Heart right ventricle (tissue), 16 donors: ENCODE measurements at regions of chr1 and their contacts with region 1.

Region 1: DNA sequence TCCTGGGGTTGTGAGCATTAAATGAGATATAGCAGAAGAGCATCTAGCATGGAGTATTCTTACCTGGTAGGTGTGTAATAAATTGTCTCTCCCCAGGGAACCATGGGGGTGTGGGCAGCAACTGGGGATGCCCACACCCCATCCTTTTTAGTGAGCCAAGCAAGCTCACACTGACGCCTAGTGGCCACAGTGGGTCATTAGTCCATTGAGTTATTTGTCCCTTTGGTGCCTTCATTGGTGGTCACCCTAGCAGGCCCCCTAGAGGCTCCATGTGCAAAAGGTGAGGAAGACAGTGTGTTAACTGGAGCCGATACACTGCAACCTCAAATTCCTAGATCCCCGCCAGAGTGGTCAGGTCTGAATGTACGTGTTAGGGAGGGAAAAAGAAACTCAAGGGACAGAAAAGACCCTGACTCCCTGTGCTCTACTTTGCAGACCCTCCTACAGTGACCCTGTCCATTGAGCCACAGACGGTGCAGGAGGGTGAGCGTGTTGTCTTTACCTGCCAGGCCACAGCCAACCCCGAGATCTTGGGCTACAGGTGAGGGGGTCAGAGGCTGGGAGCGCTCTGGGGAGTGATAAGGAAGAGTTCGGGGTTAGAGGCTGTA is 93.3 kb upstream of the CD1D start:
- DNase-seq: peak in 1 of 2 donors; percentile 59
- ATAC-seq: peak in 6 of 8 donors; percentile 50 to 81 (median 73)
- H3K4me3 ChIP-seq: no peak overlapping the region
- H3K27ac ChIP-seq: no peak overlapping the region
- H3K4me1 ChIP-seq: no peaks in the 10 kb centered on the region
- H3K27me3 ChIP-seq: no peaks in the 10 kb centered on the region
- CTCF ChIP-seq: peak; percentile 76 to 89 (median 85)

Region 2: DNA sequence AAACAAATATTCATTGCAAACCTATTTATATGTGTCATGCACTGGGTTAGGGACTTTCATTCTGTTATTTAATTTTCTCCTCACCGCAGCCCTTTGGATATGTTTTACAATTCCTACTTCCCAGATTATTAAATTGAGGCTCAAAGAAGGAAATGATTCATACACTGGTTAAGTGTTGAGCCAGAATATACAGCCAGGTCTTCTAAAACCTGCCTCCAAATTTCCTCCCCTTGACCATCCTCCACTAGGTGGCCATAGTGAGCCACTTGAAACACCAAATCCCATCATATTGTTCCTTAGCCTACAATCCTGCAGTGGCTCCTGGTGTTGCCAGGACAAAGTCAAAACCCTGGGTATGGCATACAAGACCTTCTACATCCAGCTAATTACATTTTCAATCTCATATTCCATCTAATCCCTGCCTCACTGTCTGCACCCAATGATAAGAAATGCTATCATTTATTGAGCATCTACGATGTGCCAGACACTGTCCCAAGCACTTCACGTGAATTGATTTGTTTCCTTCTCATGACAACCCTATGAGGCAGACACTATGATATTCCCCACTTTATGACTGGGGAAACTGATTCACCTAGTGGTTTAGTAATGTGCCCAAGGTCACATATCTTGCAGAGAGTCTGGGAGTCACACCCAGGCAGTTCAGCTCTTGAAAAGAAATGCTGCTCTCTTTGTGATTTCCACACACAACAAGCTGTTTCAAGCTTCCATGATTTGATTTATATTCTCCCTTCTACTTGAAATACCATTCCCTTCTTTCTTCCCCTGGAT is 117.5 kb before region 1 on chr1:
- intact Hi-C with region 1: loop called in 1 of 10 experiments (anchors 5 kb)
- DNase-seq: peak in 1 of 2 donors; percentile 66
- ATAC-seq: peak in 7 of 8 donors; percentile 62 to 78 (median 64)
- H3K4me3 ChIP-seq: no peak overlapping the region
- H3K27ac ChIP-seq: peak overlapping the region in 3 of 10 donors; percentile 2 to 46 (median 33)
- H3K4me1 ChIP-seq: peaks cover 0 to 23% (median 13%) of the 10 kb centered on the region in 9 donors
- H3K27me3 ChIP-seq: no peaks in the 10 kb centered on the region
- CTCF ChIP-seq: peak; percentile 57 to 84 (median 79)

Region 3: DNA sequence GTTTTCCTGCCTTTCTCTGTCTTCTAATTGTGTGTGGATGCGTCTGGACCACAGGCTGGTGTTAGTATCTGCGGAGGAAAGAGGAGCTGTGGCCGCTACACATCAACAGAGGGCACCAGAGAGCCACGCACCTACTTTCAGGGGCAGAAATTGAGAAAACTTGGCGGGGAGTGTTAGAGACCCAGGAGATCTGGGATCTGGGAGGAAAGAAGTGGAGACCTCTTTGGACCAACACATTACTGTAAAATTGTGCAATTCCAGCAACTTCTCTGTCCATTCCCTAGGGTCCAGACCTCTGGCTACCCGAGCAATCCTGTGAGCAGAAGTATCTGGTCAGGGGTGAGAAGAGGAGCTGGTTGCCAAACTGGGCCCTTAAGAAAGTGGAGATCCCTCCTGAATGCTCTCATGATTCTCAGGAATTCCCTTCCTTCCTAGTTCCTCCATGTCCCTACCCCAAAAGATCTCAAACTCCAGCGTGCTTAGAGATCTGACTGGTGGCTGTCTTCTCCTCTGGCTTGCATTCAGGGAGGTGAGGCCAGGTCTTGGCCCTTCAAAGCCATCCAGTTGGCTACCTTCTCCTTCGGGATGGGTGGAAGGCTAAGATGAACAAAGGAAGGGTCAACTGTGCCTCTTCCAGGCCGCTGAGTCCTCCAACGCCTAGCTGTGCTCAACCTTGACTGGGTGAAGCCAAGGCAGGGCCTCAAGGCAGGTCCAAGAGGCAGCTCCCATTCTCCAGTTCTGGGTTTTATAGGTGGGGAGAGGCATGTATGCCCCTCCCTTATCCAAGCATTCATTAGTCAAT is 95.2 kb before region 1 on chr1:
- intact Hi-C with region 1: loop called in 9 of 10 experiments (anchors 1 to 10 kb)
- DNase-seq: peak; percentile 72 to 77
- ATAC-seq: peak; percentile 64 to 83 (median 70)
- H3K4me3 ChIP-seq: peak overlapping the region in 2 of 10 donors; percentile 66 to 95
- H3K27ac ChIP-seq: peak overlapping the region in 9 of 10 donors; percentile 39 to 94 (median 55)
- H3K4me1 ChIP-seq: peaks cover 4 to 47% (median 18%) of the 10 kb centered on the region in 9 donors
- H3K27me3 ChIP-seq: peaks cover 0 to 31% (median 6%) of the 10 kb centered on the region in 7 donors
- CTCF ChIP-seq: peak; percentile 84 to 98 (median 95)

Region 4: GRCh38 chr1:158035976-158036583 is 51.3 kb before region 1 on chr1:
- intact Hi-C with region 1: loop called in 1 of 10 experiments (anchors 2 kb)
- DNase-seq: peak in 1 of 2 donors; percentile 35
- ATAC-seq: peak in 5 of 8 donors; percentile 24 to 55 (median 49)
- H3K4me3 ChIP-seq: no peak overlapping the region
- H3K27ac ChIP-seq: peak overlapping the region in 1 of 10 donors; percentile 9
- H3K4me1 ChIP-seq: peaks cover 2 to 54% (median 29%) of the 10 kb centered on the region in 9 donors
- H3K27me3 ChIP-seq: no peaks in the 10 kb centered on the region
- CTCF ChIP-seq: peak; percentile 52 to 85 (median 76)